CD4-positive, alpha-beta memory T cell (primary cell): ENCODE measurements at regions of chr7 and their contacts with region 1.

Region 1: DNA sequence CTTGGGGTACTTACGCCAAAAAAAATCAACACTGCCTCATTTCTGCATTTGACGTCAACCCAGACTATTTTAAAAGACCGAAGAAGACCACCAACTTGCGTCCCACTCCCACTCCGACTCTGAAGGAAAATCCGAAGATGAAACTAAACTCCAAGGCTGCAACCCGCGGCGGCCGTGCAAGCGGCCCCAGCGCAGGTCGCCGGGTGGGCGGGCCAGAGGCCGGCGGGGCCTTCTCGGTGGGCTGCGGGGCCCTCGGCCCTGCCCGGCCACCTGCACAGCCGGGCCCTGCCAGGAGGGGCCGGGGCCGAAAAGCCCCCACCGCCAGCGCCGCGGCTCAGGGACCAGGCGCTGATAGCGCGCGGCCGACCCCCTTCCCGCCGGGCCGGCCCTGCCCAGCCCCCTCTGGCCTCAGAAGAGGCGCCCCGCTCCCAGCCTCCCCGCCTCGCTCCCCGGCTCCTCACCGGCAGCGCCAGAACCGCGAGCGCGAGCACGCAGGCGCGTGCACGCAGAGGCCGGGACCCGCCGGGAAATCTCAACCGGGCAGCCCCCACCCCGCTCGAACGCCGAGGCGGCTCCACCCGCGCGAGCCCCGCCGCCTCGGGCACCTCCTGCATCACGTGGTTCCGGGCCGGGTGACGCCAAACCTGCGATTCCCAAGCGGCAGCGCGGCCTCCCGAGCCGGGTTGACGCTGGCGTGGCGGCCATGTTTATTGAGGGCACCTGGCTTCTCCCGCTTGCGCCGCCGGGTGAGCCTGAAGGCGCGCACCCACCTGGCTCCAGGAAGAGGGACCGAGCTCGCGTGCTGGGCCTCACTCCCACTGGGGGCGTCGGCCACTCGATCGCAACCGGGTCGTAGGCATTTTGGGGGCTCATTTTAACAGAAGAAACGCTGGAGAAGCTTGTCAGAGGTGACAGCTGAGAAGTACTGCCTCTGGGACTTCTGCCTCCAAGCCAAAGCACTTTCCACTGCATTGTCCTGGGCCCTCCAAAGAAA is at the start of gene C7orf25:
- DNase-seq: peak; percentile 95 to 96 (median 95)
- H3K4me3 ChIP-seq: peak within 1 kb of the TSS; percentile 33 to 67
- H3K4me3 Mint-ChIP-seq: peak within 1 kb of the TSS; percentile 90 to 97 (median 94)
- H3K27ac ChIP-seq: peak within 1 kb of the TSS; percentile 62
- H3K27ac Mint-ChIP-seq: peak within 1 kb of the TSS; percentile 89 to 96 (median 94)
- H3K4me1 ChIP-seq: peaks cover 24% of the 10 kb centered on the region
- H3K4me1 Mint-ChIP-seq: peaks cover 13 to 36% (median 24%) of the 10 kb centered on the region in 4 donors
- H3K27me3 ChIP-seq: no peaks in the 10 kb centered on the region
- H3K27me3 Mint-ChIP-seq: no peaks in the 10 kb centered on the region
- total RNA-seq, gene C7orf25: 8.8 to 9.2 TPM

Region 2: DNA sequence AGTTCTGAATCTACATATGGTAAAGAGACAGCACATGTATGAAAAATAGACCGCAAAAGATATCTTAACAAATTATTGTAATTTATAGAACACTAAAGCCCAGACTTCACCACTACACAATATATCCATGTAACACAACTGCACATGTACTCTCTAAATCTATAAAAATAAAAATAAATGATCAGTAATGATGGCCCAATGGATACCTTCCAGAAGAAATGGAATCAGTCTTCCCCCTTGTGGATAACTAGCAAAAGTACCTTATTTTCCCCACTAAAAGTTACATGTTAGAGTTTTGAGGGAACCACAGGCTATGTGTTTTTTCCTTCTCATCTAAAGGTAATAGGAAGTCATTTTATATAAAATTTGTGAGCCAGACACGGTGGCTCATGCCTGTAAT is 25.6 kb before region 1 on chr7:
- CTCF ChIA-PET with region 1: no interaction called
- POLR2A ChIA-PET with region 1: no interaction called
- intact Hi-C with region 1: loop called (anchors 1 kb)
- DNase-seq: no peak
- H3K4me3 ChIP-seq: no peak overlapping the region
- H3K4me3 Mint-ChIP-seq: peak overlapping the region in 1 of 8 donors; percentile 2
- H3K27ac ChIP-seq: no peak overlapping the region
- H3K27ac Mint-ChIP-seq: peak overlapping the region in 1 of 7 donors; percentile 22
- H3K4me1 ChIP-seq: peaks cover 17% of the 10 kb centered on the region
- H3K4me1 Mint-ChIP-seq: peaks cover 10 to 25% (median 18%) of the 10 kb centered on the region in 4 donors
- H3K27me3 ChIP-seq: peaks cover 4% of the 10 kb centered on the region
- H3K27me3 Mint-ChIP-seq: peaks cover 0 to 4% of the 10 kb centered on the region in 2 donors